CD4-positive, alpha-beta T cell (primary cell): ENCODE measurements at regions of chr22 and their contacts with region 1.

Region 1: DNA sequence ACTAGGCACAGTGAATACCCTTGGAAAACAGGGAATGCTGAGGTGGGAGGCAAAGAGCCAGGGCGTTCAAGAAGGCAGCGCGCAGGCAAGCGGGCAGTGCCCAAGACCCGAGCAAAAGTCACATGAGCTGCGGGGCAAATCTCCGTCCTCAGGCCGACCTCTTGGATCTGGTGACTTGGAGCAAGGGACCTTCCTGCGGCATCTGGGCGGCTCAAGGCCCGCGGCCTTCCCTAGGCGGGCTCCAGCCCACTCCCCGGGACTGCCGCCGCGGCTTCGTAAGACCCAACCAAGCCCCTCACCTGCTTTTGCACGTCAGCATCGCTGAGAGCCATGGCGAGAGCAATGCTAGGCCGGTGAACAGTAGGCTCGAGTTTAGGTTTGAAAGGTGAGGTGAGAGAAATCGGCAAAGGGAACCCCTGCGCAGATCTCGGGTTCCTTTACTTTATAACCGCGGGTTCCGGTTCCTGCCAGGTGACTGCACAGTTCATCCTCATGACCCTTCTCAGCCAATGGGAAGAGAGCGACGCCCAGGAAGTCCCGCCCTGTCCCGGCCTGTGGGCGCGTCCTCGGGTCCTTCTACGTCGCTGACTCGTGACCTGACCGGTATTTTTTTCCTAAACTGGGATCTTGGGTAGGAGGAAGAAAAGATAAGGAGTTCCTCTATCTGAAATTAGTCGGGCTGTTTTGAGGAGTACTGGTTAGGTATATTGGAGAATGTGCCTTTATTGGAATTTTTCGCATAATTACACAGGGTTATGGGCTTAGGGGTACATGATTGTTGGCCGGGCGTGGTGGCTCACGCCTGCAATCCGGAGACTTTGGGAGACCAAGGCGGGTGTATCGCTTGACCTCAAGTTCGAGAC is at the start of gene ATP6V1E1:
- DNase-seq: peak; percentile 88 to 98 (median 92)
- ATAC-seq: peak; percentile 100
- H3K4me3 ChIP-seq: peak within 1 kb of the TSS; percentile 93
- H3K4me3 Mint-ChIP-seq: peak within 1 kb of the TSS; percentile 92
- H3K27ac ChIP-seq: peak within 1 kb of the TSS; percentile 82 to 93
- H3K27ac Mint-ChIP-seq: peak within 1 kb of the TSS; percentile 93
- H3K4me1 ChIP-seq: peaks cover 32% of the 10 kb centered on the region
- H3K4me1 Mint-ChIP-seq: peaks cover 28% of the 10 kb centered on the region
- H3K27me3 ChIP-seq: no peaks in the 10 kb centered on the region
- H3K27me3 Mint-ChIP-seq: no peaks in the 10 kb centered on the region
- CTCF ChIP-seq: no peak
- total RNA-seq, gene ATP6V1E1: 48.4 to 50.8 TPM

Region 2: DNA sequence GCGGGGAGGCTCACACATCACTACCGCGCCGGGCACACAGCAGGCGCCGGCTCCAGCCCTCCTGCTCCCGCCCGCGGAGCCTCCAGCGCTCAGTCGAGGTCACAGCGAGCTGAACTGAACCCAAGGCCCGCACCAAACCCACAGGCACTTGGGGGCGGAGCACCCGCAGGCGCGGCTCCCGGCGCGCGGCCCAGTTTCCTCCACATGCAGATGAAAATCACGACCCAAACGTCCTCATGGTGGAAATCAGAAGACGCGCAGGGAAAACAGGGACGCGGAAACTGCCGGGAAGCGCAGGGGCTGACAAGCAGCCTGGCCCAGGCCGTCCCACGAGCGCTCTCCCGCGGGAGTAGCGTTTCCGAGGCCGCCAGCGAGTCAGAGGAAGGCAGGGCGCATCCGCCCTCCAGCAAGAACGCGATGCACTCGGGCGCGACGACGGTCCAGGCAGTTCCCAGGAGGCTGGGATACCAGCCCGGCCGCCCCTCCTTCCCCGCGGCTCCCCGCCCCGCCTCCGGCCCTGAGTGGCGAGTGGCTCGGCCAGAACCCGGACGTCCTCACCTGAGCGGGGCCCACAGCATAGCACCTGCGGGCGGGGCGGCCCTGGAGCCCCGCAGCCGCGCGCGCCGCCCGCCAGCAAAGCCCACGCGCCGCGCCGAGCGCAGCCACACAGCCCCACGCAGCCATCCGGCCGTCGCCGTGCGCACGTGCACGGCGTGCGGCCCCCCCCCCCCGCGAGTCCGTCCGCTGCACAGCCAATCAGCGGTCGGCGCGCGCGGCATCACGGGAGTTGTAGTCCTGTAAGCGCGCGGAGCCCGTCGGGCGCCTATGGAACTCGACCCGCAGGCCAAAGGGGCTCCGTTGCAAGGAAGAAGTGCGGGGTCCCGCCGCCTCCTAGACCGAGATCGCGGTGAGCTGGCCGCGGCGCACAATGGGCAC is 469.7 kb before region 1 on chr22 and contains the start of gene HDHD5:
- CTCF ChIA-PET with region 1: interaction called, 3 read pairs
- POLR2A ChIA-PET with region 1: no interaction called
- intact Hi-C with region 1: loop called in 1 of 2 experiments (anchors 5 kb)
- DNase-seq: peak; percentile 82 to 96 (median 88)
- ATAC-seq: peak; percentile 92
- H3K4me3 ChIP-seq: peak within 1 kb of the TSS; percentile 85
- H3K4me3 Mint-ChIP-seq: peak within 1 kb of the TSS; percentile 82
- H3K27ac ChIP-seq: peak within 1 kb of the TSS; percentile 41 to 65
- H3K27ac Mint-ChIP-seq: peak within 1 kb of the TSS; percentile 58
- H3K4me1 ChIP-seq: peaks cover 39% of the 10 kb centered on the region
- H3K4me1 Mint-ChIP-seq: peaks cover 37% of the 10 kb centered on the region
- H3K27me3 ChIP-seq: no peaks in the 10 kb centered on the region
- H3K27me3 Mint-ChIP-seq: no peaks in the 10 kb centered on the region
- CTCF ChIP-seq: no peak
- total RNA-seq, gene HDHD5: 11.0 to 11.6 TPM

Region 3: DNA sequence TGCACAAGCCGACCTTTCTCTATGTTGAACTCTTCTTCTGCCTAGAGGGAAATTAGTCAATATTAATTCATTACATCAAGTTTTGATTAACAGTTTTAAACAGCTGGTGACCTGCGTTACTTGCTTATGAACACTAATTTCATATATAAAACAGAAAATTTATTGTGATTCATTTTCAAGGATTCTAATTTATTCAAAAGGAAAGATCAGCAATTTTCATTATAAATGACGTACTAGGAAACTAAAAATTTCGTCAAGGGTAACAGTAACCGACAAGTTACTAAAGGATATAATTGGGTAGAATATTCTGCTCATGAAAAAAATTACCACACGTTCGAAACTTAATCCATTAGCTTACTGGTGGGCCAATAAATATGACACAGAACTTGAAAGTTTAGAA is 15.3 kb before region 1 on chr22:
- CTCF ChIA-PET with region 1: no interaction called
- POLR2A ChIA-PET with region 1: no interaction called
- intact Hi-C with region 1: no loop called
- DNase-seq: no peak
- ATAC-seq: no peak
- H3K4me3 ChIP-seq: no peak overlapping the region
- H3K4me3 Mint-ChIP-seq: no peak overlapping the region
- H3K27ac ChIP-seq: no peak overlapping the region
- H3K27ac Mint-ChIP-seq: no peak overlapping the region
- H3K4me1 ChIP-seq: no peaks in the 10 kb centered on the region
- H3K4me1 Mint-ChIP-seq: peaks cover 7% of the 10 kb centered on the region
- H3K27me3 ChIP-seq: no peaks in the 10 kb centered on the region
- H3K27me3 Mint-ChIP-seq: no peaks in the 10 kb centered on the region
- CTCF ChIP-seq: no peak

Region 4: GRCh38 chr22:17638432-17639246 is 10.1 kb after region 1 on chr22 and contains the start of gene BCL2L13:
- CTCF ChIA-PET with region 1: interaction called, 3 read pairs
- POLR2A ChIA-PET with region 1: interaction called, 3 read pairs
- intact Hi-C with region 1: loop called (anchors 1 kb)
- DNase-seq: peak; percentile 77 to 94 (median 84)
- ATAC-seq: peak; percentile 90
- H3K4me3 ChIP-seq: peak within 1 kb of the TSS; percentile 85
- H3K4me3 Mint-ChIP-seq: peak within 1 kb of the TSS; percentile 92
- H3K27ac ChIP-seq: peak within 1 kb of the TSS; percentile 98 to 99
- H3K27ac Mint-ChIP-seq: peak within 1 kb of the TSS; percentile 96
- H3K4me1 ChIP-seq: peaks cover 24% of the 10 kb centered on the region
- H3K4me1 Mint-ChIP-seq: peaks cover 31% of the 10 kb centered on the region
- H3K27me3 ChIP-seq: no peaks in the 10 kb centered on the region
- H3K27me3 Mint-ChIP-seq: no peaks in the 10 kb centered on the region
- CTCF ChIP-seq: no peak
- total RNA-seq, gene BCL2L13: 8.1 to 10.0 TPM

Region 5: DNA sequence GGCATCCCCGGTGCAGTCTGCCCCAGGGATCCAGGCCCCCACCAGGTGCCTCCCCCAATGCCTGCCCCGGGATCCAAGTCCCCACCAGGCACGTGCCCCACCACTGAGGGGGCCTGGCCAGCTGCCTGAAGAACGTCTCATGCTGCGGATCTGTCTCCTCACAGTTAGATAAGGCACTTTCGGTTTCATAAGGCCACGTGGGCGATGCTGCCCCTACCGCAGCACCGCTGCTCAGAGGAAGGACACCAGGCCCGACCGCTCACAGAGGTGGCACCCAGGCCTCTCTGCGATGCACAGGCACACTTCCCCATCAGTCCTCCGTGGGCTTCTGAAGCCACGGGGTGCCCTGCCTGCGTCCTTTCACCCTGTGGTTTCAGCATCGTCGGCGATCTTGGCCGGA is 213.9 kb after region 1 on chr22:
- CTCF ChIA-PET with region 1: no interaction called
- POLR2A ChIA-PET with region 1: no interaction called
- intact Hi-C with region 1: no loop called
- DNase-seq: peak; percentile 5 to 73 (median 30)
- ATAC-seq: peak; percentile 77
- H3K4me3 ChIP-seq: peak overlapping the region; percentile 47
- H3K4me3 Mint-ChIP-seq: peak overlapping the region; percentile 15
- H3K27ac ChIP-seq: peak overlapping the region in 1 of 2 donors; percentile 34
- H3K27ac Mint-ChIP-seq: peak overlapping the region; percentile 49
- H3K4me1 ChIP-seq: peaks cover 18% of the 10 kb centered on the region
- H3K4me1 Mint-ChIP-seq: no peaks in the 10 kb centered on the region
- H3K27me3 ChIP-seq: no peaks in the 10 kb centered on the region
- H3K27me3 Mint-ChIP-seq: no peaks in the 10 kb centered on the region
- CTCF ChIP-seq: no peak